B cell (primary cell): ENCODE measurements at regions of chr3 and their contacts with region 1.

Region 1: GRCh38 chr3:61858056-61858455 is 296.7 kb downstream of the PTPRG start:
- DNase-seq: no peak
- ATAC-seq: no peak
- H3K4me3 ChIP-seq: no peak overlapping the region
- H3K4me3 Mint-ChIP-seq: no peak overlapping the region
- H3K27ac ChIP-seq: no peak overlapping the region
- H3K27ac Mint-ChIP-seq: no peak overlapping the region
- H3K4me1 ChIP-seq: no peaks in the 10 kb centered on the region
- H3K4me1 Mint-ChIP-seq: no peaks in the 10 kb centered on the region
- H3K27me3 ChIP-seq: no peaks in the 10 kb centered on the region
- H3K27me3 Mint-ChIP-seq: no peaks in the 10 kb centered on the region
- CTCF ChIP-seq: no peak

Region 2: DNA sequence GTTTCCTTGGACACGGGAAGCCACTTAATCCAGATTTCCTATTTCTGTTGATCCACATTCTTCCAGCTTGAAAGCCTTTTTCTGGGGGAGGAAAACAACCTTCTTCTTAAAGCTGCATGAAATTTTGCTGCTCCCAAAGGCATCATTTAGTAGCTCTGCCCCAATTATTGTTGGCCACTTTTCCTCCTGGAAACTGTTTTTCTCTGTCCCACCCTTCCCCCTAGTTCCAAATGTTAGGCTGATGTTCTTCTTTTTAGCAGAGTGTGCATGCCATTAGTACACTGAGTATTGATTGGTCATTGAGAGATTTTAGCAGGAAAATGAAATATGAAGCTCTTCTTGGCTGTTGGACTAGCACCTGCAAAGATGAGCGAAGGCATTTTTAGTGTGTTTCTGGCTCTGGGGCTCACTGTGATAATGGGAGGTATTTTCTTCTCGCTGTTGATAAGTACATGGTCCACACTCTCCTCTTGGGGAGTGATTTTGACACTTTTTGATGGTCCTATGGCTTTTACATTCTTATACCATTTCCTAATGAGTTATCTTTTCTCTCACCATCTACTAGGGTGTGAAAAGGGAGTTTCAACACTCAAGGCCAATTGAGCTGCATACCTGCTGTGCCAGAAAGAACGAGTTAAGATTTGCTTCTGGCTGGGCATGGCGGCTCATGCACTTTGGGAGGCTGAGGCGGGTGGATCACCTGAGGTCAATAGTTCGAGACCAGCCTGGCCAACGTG is 96.2 kb before region 1 on chr3:
- CTCF ChIA-PET with region 1: no interaction called
- POLR2A ChIA-PET with region 1: no interaction called
- intact Hi-C with region 1: no loop called
- DNase-seq: no peak
- ATAC-seq: no peak
- H3K4me3 ChIP-seq: no peak overlapping the region
- H3K4me3 Mint-ChIP-seq: no peak overlapping the region
- H3K27ac ChIP-seq: no peak overlapping the region
- H3K27ac Mint-ChIP-seq: no peak overlapping the region
- H3K4me1 ChIP-seq: no peaks in the 10 kb centered on the region
- H3K4me1 Mint-ChIP-seq: no peaks in the 10 kb centered on the region
- H3K27me3 ChIP-seq: no peaks in the 10 kb centered on the region
- H3K27me3 Mint-ChIP-seq: no peaks in the 10 kb centered on the region
- CTCF ChIP-seq: no peak

Region 3: GRCh38 chr3:61936344-61936937 is 78.4 kb after region 1 on chr3:
- CTCF ChIA-PET with region 1: interaction called, 6 read pairs
- POLR2A ChIA-PET with region 1: no interaction called
- intact Hi-C with region 1: loop called (anchors 5 kb)
- DNase-seq: peak; percentile 10
- ATAC-seq: no peak
- H3K4me3 ChIP-seq: no peak overlapping the region
- H3K4me3 Mint-ChIP-seq: no peak overlapping the region
- H3K27ac ChIP-seq: no peak overlapping the region
- H3K27ac Mint-ChIP-seq: no peak overlapping the region
- H3K4me1 ChIP-seq: no peaks in the 10 kb centered on the region
- H3K4me1 Mint-ChIP-seq: no peaks in the 10 kb centered on the region
- H3K27me3 ChIP-seq: no peaks in the 10 kb centered on the region
- H3K27me3 Mint-ChIP-seq: peaks cover 4% of the 10 kb centered on the region
- CTCF ChIP-seq: peak; percentile 49

Region 4: GRCh38 chr3:62188681-62189383 is 330.8 kb after region 1 on chr3:
- CTCF ChIA-PET with region 1: interaction called, 3 read pairs
- POLR2A ChIA-PET with region 1: no interaction called
- intact Hi-C with region 1: loop called (anchors 5 kb)
- DNase-seq: peak; percentile 61
- ATAC-seq: peak; percentile 28
- H3K4me3 ChIP-seq: no peak overlapping the region
- H3K4me3 Mint-ChIP-seq: peak overlapping the region; percentile 37
- H3K27ac ChIP-seq: no peak overlapping the region
- H3K27ac Mint-ChIP-seq: no peak overlapping the region
- H3K4me1 ChIP-seq: peaks cover 2 to 5% of the 10 kb centered on the region in 2 donors
- H3K4me1 Mint-ChIP-seq: peaks cover 7% of the 10 kb centered on the region
- H3K27me3 ChIP-seq: no peaks in the 10 kb centered on the region
- H3K27me3 Mint-ChIP-seq: no peaks in the 10 kb centered on the region
- CTCF ChIP-seq: peak; percentile 85